Uterus (tissue), 4 donors: ENCODE measurements at regions of chr2 and their contacts with region 1.

Region 1: DNA sequence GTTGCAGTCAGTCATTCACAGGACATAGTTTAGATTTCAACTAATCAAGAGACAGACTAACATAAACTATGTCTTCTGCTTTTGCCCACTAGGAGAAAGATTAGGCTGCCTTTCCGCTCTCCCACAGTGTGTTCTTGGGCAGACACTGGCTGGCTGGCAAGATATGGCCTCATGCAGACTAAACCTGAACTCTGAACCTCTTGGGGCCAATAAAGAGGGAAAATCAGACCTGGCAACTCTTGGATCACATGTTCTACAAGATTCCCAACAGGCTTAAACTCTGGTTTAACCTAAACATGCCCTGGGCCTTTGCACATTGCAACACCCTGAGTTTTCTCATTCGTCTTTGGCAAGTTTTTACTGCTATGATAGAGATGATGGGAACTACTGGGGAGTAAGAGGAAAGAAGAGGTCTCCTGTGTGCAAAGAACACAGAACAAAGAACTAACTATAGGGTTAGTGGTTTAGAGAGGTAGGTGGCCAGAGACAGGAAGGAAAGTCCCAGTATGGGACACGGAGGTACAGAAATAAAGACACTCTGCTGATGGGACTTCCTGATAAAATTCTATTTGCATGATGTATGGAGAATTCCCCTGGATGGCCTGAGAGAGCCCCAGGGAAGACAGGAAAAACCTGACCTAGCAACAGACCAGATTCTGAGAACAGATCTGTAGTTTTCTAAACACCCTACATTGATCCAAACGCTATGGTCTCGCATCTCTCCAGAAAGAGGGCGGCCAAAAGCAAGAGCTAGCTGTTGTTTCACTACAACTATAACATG is 2.0 kb upstream of the ATRAID start:
- DNase-seq: no peak
- H3K4me3 ChIP-seq: no peak overlapping the region
- H3K27ac ChIP-seq: no peak overlapping the region
- H3K4me1 ChIP-seq: peaks cover 0 to 11% of the 10 kb centered on the region in 2 donors
- H3K27me3 ChIP-seq: no peaks in the 10 kb centered on the region
- CTCF ChIP-seq: no peak
- POLR2A ChIP-seq: no peak

Region 2: DNA sequence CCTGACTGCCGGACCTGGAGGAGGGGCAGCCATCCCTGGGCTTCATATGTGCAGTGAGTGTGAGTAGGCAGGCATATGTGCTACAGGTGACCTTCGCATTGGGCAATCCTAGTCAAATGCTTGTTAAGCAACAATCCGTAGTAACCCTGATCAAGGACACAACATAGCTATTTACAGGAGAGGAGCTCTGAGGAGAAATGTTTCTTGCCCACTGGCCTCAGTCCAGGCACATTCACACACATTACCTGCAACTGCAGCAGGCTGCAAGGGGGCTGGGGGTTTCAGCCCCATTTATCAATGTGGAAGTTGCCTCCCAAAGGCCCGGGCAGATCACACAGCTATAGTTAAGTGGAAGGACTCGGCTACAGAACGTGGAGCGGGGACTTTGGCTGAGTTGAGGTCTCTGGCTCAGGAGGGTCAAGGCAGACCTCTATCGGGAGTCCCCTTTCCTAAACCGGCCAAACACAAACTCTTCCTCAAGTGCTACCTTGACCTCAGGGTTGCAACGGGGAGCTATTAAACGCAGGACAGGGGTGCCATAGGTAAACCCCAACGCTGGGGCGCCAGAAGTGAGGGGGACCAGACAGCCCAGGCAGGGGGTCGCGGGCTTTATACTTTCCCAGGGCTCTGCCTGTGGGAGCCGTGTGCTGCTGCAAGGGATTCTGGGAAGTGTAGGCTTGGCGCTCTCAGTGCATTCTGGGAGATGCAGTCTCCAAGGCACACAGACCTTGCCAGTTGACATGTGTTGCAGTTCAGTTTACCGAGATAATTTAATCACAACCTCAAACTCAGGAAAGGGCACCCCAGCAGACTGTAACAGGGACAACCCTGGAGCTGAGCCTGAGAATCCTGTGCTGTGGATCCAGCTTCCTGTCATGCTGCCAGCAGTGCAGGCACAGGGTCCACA is 113.8 kb before region 1 on chr2:
- intact Hi-C with region 1: loop called (anchors 5 kb)
- DNase-seq: peak; percentile 52 to 70
- H3K4me3 ChIP-seq: peak overlapping the region; percentile 13 to 17
- H3K27ac ChIP-seq: no peak overlapping the region
- H3K4me1 ChIP-seq: no peaks in the 10 kb centered on the region
- H3K27me3 ChIP-seq: no peaks in the 10 kb centered on the region
- CTCF ChIP-seq: no peak
- POLR2A ChIP-seq: no peak